HCT116 (cell line): ENCODE measurements at regions of chr22 and their contacts with region 1.

Region 1: DNA sequence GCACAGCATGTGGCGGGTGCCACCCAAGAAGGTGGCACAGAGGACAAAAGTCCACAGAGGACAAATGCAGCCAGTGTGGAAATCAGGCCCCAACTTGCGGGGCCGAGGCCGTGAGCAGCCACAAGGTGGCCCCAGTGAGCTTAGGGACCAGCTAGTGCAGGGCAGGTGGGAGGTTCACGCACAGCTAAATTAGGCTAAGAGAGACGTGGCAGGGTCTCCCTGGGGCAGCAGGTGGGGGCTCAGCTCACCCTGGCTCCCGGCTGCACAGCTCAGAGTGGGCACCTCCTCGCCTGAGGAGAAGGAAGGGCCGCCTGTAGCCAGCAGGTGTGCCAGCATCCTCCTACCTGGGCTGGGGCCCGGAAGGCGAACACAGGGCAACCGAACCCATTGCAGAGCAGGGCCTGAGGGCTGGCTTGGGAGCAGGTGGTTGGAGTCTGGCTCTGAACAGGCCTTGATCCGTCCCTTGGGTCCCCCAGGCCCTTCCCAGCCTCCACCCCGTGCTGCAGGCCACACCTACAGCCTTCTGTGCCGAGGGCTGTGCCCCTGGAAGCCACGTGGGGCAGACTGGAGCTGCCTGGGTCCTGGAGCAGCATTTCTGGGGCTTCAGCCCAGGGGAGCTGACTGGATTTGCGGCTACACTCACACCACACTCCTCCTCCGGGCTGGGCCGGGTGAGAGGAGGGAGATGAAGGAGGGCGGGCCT is 26.1 kb upstream of the CELSR1 start:
- DNase-seq: peak; percentile 57
- ATAC-seq: peak; percentile 96
- H3K4me3 ChIP-seq: peak overlapping the region; percentile 32 to 47
- H3K27ac ChIP-seq: peak overlapping the region; percentile 81
- H3K4me1 ChIP-seq: peaks cover 19 to 32% of the 10 kb centered on the region in 2 experiments
- H3K27me3 ChIP-seq: no peaks in the 10 kb centered on the region
- CTCF ChIP-seq: peak; percentile 72 to 81 (median 75)
- POLR2A ChIP-seq: peak; percentile 40
- RAD21 ChIP-seq: peak; percentile 83

Region 2: DNA sequence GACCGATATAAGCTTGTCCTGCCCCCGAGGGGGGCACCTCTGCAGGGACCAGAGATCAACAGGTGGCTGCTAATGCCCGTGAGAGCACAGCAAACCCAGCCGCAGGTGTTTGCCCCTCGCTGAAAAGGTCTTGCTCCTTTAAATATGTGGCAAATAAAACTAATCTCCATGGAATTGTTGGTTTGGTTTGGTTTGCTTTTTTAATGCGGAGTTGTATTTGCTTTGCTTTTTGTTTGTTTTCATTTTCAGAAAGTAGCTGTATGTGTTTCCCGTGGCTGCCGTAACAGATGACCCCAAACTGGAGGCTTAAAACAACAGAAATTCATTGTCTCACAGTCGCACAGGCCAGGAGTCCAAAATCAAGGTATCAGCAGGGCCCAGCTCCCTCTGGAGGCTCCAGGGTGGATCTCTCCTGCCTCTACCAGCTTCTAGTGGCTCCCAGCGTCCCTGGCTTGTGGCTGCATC is 119.1 kb before region 1 on chr22:
- CTCF ChIA-PET with region 1: no interaction called
- POLR2A ChIA-PET with region 1: no interaction called
- RAD21 ChIA-PET with region 1: no interaction called
- intact Hi-C with region 1: no loop called
- DNase-seq: no peak
- ATAC-seq: peak; percentile 67; the same call in 1 of the 2 replicates
- H3K4me3 ChIP-seq: no peak overlapping the region
- H3K27ac ChIP-seq: no peak overlapping the region
- H3K4me1 ChIP-seq: peaks cover 0 to 4% of the 10 kb centered on the region in 2 experiments; a peak in 1 of 4 replicates
- H3K27me3 ChIP-seq: no peaks in the 10 kb centered on the region
- CTCF ChIP-seq: peak in 2 of 3 experiments; percentile 11 to 19; a peak in 1 of 6 replicates
- POLR2A ChIP-seq: no peak
- RAD21 ChIP-seq: no peak; the same call in 1 of the 2 replicates

Region 3: DNA sequence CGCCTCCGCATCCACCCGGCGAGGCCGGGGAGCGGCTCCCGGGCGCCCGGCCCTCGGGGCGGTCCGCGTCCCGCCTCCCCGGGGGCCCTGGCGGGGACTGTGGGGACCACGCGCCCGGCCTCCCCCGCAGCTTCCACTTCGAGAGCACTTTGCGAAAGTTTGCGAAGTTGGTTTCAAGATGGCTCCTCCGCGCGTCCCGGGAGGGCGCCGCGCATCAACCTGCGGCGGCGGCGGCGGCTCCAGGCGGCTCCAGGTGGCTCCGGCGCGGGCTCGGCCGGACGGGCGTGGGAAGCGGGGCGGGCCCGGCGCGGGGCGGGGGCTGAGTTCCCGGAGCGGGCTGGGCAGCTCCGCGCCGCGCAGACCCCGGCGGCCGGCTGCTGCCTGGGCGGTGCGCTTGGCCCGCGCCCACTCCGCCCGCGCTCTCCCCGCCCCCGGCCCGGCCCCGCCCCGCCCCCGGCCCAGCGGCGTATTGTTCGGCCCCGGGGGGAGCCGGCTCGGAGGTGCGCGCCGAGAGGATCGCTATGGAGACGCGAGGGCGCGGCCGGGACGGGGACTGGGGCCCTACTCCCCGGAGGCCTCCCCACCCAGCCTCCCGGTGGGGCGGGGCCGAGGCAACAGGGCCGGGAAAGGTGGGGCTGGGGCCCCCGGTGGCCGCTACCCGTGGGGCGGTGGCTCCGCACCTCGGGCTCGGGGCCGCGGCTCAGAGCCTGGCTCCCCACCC is 26.1 kb before region 1 on chr22 and contains the start of gene CELSR1:
- CTCF ChIA-PET with region 1: no interaction called
- POLR2A ChIA-PET with region 1: no interaction called
- RAD21 ChIA-PET with region 1: no interaction called
- intact Hi-C with region 1: no loop called
- DNase-seq: no peak
- ATAC-seq: peak; percentile 73
- H3K4me3 ChIP-seq: peak within 1 kb of the TSS; percentile 57 to 64
- H3K27ac ChIP-seq: peak within 1 kb of the TSS; percentile 72
- H3K4me1 ChIP-seq: peaks cover 10 to 23% of the 10 kb centered on the region in 2 experiments
- H3K27me3 ChIP-seq: no peaks in the 10 kb centered on the region
- CTCF ChIP-seq: no peak
- POLR2A ChIP-seq: no peak
- RAD21 ChIP-seq: no peak
- total RNA-seq, gene CELSR1: 19.6 TPM

Region 4: DNA sequence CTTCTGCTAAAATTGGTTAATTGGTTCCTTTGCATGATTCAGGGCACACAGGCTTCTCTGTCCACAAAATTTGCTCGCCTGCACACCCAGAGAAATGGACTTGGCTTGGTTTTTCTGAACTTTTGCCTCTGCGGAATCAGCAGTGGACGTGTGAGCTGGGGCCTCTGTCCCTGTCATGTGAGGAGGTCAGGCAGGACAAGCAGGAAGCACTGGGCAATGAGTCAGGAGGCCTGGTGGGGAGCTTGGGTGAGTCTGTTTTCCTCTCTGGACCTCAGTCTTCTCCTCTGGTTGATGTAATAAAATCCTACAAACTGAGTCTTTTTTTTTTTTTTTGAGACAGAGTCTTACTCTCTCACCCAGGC is 15.7 kb before region 1 on chr22:
- CTCF ChIA-PET with region 1: interaction called, 13 read pairs
- POLR2A ChIA-PET with region 1: no interaction called
- RAD21 ChIA-PET with region 1: no interaction called
- intact Hi-C with region 1: no loop called
- DNase-seq: no peak
- ATAC-seq: no peak
- H3K4me3 ChIP-seq: no peak overlapping the region
- H3K27ac ChIP-seq: no peak overlapping the region
- H3K4me1 ChIP-seq: peaks cover 0 to 15% of the 10 kb centered on the region in 2 experiments; a peak in 2 of 4 replicates
- H3K27me3 ChIP-seq: no peaks in the 10 kb centered on the region
- CTCF ChIP-seq: no peak
- POLR2A ChIP-seq: no peak
- RAD21 ChIP-seq: no peak

Region 5: GRCh38 chr22:46584081-46584921 is 20.8 kb after region 1 on chr22:
- CTCF ChIA-PET with region 1: no interaction called
- POLR2A ChIA-PET with region 1: no interaction called
- RAD21 ChIA-PET with region 1: no interaction called
- intact Hi-C with region 1: no loop called
- DNase-seq: no peak
- ATAC-seq: no peak
- H3K4me3 ChIP-seq: no peak overlapping the region
- H3K27ac ChIP-seq: no peak overlapping the region
- H3K4me1 ChIP-seq: peaks cover 3 to 14% of the 10 kb centered on the region in 2 experiments; a peak in 2 of 4 replicates
- H3K27me3 ChIP-seq: no peaks in the 10 kb centered on the region
- CTCF ChIP-seq: no peak
- POLR2A ChIP-seq: no peak
- RAD21 ChIP-seq: no peak

Region 6: GRCh38 chr22:46596819-46597218 is 33.3 kb after region 1 on chr22:
- CTCF ChIA-PET with region 1: interaction called, 6 read pairs
- POLR2A ChIA-PET with region 1: no interaction called
- RAD21 ChIA-PET with region 1: no interaction called
- intact Hi-C with region 1: loop called (anchors 1 kb)
- DNase-seq: peak; percentile 76
- ATAC-seq: peak; percentile 93
- H3K4me3 ChIP-seq: peak overlapping the region in 1 of 2 experiments; percentile 32; a peak in 2 of 4 replicates
- H3K27ac ChIP-seq: peak overlapping the region; percentile 58
- H3K4me1 ChIP-seq: peaks cover 20 to 23% of the 10 kb centered on the region in 2 experiments
- H3K27me3 ChIP-seq: no peaks in the 10 kb centered on the region
- CTCF ChIP-seq: peak in 2 of 3 experiments; percentile 43 to 55; a peak in 4 of 6 replicates
- POLR2A ChIP-seq: no peak
- RAD21 ChIP-seq: peak; percentile 49

Region 7: GRCh38 chr22:46661221-46661851 is 97.8 kb after region 1 on chr22:
- CTCF ChIA-PET with region 1: interaction called, 7 read pairs
- POLR2A ChIA-PET with region 1: no interaction called
- RAD21 ChIA-PET with region 1: interaction called in 1 of 2 experiments, 4 read pairs
- intact Hi-C with region 1: loop called (anchors 5 kb)
- DNase-seq: peak; percentile 62
- ATAC-seq: peak; percentile 76
- H3K4me3 ChIP-seq: no peak overlapping the region
- H3K27ac ChIP-seq: peak overlapping the region; percentile 45; the same call in 1 of the 2 replicates
- H3K4me1 ChIP-seq: peaks cover 23 to 25% of the 10 kb centered on the region in 2 experiments
- H3K27me3 ChIP-seq: no peaks in the 10 kb centered on the region
- CTCF ChIP-seq: no peak
- POLR2A ChIP-seq: no peak
- RAD21 ChIP-seq: no peak

Region 8: GRCh38 chr22:46737976-46738646 is 174.6 kb after region 1 on chr22 and contains the start of gene CERK:
- CTCF ChIA-PET with region 1: interaction called, 20 read pairs
- POLR2A ChIA-PET with region 1: no interaction called
- RAD21 ChIA-PET with region 1: interaction called, 3 to 7 read pairs
- intact Hi-C with region 1: loop called (anchors 5 kb)
- DNase-seq: no peak
- ATAC-seq: peak; percentile 71
- H3K4me3 ChIP-seq: peak within 1 kb of the TSS; percentile 72 to 75
- H3K27ac ChIP-seq: peak within 1 kb of the TSS; percentile 99
- H3K4me1 ChIP-seq: peaks cover 20 to 31% of the 10 kb centered on the region in 2 experiments
- H3K27me3 ChIP-seq: no peaks in the 10 kb centered on the region
- CTCF ChIP-seq: no peak
- POLR2A ChIP-seq: peak; percentile 69
- RAD21 ChIP-seq: no peak
- total RNA-seq, gene CERK: 35.0 TPM

Region 9: DNA sequence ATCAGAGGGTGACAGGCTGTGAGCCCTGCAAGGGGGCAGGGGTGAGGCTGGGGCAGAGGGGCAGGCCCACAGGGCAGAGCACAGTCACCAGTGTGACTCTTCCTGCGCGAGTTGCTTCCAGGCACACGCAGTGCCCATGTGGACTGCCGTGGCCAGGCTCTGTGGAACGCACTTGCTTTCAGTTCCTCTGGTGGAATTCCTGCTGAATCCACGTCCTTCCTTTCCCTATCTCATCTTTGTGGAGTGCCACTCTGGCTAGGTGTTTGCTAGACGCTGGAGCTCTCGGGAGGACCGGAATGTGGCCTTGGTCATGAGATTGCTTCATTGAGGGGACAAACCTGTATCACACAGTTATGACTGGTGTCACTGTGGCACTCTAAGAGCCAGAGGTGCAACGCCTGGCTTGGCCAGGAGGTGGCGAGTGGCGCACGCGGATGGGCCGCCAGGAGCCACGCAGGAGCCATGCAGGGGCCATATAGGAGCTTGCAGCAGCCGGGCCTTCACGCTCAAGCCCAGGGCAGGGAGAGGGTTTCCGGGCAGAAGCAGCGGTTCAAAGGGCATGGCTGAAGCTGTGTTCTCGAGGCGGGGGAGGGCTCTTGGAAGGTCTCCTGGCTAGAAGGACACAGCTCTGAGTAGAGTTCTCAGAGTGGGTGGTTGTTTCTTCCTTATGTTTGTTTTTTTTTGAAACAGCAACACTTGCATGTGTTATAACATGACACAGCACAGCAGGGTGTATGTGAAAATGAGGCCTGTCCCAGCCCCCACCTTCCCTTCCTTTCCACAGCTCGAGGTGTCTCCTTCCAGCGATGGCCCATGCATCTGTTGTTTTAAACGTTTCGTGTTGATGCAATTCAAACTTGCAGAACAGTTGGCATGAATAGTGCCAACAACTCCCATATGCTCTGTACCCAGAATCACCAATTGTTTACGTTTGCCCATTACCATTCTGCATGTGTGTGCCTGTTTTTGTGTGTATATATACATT is 235.1 kb after region 1 on chr22:
- CTCF ChIA-PET with region 1: interaction called, 10 read pairs
- POLR2A ChIA-PET with region 1: no interaction called
- RAD21 ChIA-PET with region 1: interaction called in 1 of 2 experiments, 3 read pairs
- intact Hi-C with region 1: loop called (anchors 5 kb)
- DNase-seq: peak; percentile 29
- ATAC-seq: peak; percentile 93
- H3K4me3 ChIP-seq: no peak overlapping the region
- H3K27ac ChIP-seq: 0 out of 2 replicates have a peak overlapping the region, but pooled peaks have one; percentile 18
- H3K4me1 ChIP-seq: peaks cover 3 to 18% of the 10 kb centered on the region in 2 experiments
- H3K27me3 ChIP-seq: no peaks in the 10 kb centered on the region
- CTCF ChIP-seq: peak; percentile 59 to 95 (median 89); a peak in 5 of 6 replicates
- POLR2A ChIP-seq: no peak
- RAD21 ChIP-seq: peak; percentile 78